Activated CD4-positive, alpha-beta T cell treated with anti-CD3 and anti-CD28 coated beads, Interleukin-2, amount 10 ng/mL, durations not matched to agents 7 days and 5 days (primary cell): ENCODE measurements at regions of chr5 and their contacts with region 1.

Region 1: GRCh38 chr5:157743163-157744050 is at the start of gene LSM11:
- DNase-seq: peak; percentile 88
- H3K4me3 Mint-ChIP-seq: peak within 1 kb of the TSS; percentile 86
- H3K27ac Mint-ChIP-seq: peak within 1 kb of the TSS; percentile 86
- H3K4me1 Mint-ChIP-seq: peaks cover 33% of the 10 kb centered on the region
- H3K27me3 Mint-ChIP-seq: no peaks in the 10 kb centered on the region
- total RNA-seq, gene LSM11: 4.8 to 5.3 TPM

Region 2: GRCh38 chr5:157342822-157343402 is 400.5 kb before region 1 on chr5:
- CTCF ChIA-PET with region 1: interaction called, 26 read pairs
- POLR2A ChIA-PET with region 1: no interaction called
- DNase-seq: peak; percentile 35
- H3K4me3 Mint-ChIP-seq: no peak overlapping the region
- H3K27ac Mint-ChIP-seq: no peak overlapping the region
- H3K4me1 Mint-ChIP-seq: peaks cover 17% of the 10 kb centered on the region
- H3K27me3 Mint-ChIP-seq: no peaks in the 10 kb centered on the region

Region 3: GRCh38 chr5:157431544-157432200 is 311.7 kb before region 1 on chr5:
- CTCF ChIA-PET with region 1: interaction called, 31 read pairs
- POLR2A ChIA-PET with region 1: no interaction called
- DNase-seq: peak; percentile 66
- H3K4me3 Mint-ChIP-seq: no peak overlapping the region
- H3K27ac Mint-ChIP-seq: no peak overlapping the region
- H3K4me1 Mint-ChIP-seq: peaks cover 9% of the 10 kb centered on the region
- H3K27me3 Mint-ChIP-seq: peaks cover 20% of the 10 kb centered on the region

Region 4: GRCh38 chr5:157708866-157709265 is 34.5 kb before region 1 on chr5:
- CTCF ChIA-PET with region 1: interaction called, 10 read pairs
- POLR2A ChIA-PET with region 1: no interaction called
- DNase-seq: no peak
- H3K4me3 Mint-ChIP-seq: no peak overlapping the region
- H3K27ac Mint-ChIP-seq: no peak overlapping the region
- H3K4me1 Mint-ChIP-seq: no peaks in the 10 kb centered on the region
- H3K27me3 Mint-ChIP-seq: peaks cover 10% of the 10 kb centered on the region

Region 5: DNA sequence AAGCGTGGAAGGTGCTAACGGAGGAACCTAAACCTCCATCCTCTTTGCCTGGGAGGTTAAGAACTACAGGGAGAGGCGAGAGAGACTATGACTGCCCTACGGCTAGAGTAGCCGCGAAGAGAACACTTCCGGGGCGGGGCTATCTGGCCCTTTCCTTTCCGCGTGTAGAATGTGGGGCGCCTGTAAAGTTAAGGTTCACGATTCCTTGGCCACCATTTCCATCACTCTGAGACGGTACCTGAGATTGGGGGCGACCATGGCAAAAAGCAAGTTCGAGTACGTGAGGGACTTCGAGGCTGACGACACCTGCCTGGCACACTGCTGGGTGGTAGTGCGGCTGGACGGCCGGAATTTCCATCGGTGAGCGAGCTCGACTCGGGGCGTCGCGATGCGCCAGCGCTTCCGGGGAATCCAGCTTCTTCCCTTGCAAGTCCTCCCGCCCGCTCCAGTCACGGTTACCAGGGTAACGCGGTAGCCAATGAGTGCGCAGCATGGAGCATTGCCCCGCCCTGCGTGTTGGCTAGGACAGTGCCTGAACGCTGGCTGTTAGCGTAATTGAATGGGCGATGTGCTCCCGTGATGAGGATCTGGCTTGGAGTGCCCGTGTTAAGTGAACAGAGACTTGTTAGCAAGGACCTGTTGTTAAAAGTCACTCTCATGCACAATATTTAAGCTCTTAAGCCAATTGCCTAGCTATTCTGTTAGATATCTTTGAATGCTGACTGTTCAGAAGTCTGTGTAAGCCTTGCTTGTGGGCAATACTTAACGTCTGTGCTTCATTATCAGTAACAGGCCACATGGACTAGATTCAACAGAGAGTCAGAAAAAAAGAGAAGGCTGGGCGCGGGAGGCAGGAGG is 11.9 kb before region 1 on chr5 and contains the start of gene THG1L:
- CTCF ChIA-PET with region 1: interaction called, 25 read pairs
- POLR2A ChIA-PET with region 1: no interaction called
- DNase-seq: peak; percentile 99
- H3K4me3 Mint-ChIP-seq: peak within 1 kb of the TSS; percentile 83
- H3K27ac Mint-ChIP-seq: peak within 1 kb of the TSS; percentile 89
- H3K4me1 Mint-ChIP-seq: peaks cover 20% of the 10 kb centered on the region
- H3K27me3 Mint-ChIP-seq: no peaks in the 10 kb centered on the region
- total RNA-seq, gene THG1L: 10.8 to 13.9 TPM